ENCODE measurements at regions of chr5 and their contacts with region 1.

Region 1: DNA sequence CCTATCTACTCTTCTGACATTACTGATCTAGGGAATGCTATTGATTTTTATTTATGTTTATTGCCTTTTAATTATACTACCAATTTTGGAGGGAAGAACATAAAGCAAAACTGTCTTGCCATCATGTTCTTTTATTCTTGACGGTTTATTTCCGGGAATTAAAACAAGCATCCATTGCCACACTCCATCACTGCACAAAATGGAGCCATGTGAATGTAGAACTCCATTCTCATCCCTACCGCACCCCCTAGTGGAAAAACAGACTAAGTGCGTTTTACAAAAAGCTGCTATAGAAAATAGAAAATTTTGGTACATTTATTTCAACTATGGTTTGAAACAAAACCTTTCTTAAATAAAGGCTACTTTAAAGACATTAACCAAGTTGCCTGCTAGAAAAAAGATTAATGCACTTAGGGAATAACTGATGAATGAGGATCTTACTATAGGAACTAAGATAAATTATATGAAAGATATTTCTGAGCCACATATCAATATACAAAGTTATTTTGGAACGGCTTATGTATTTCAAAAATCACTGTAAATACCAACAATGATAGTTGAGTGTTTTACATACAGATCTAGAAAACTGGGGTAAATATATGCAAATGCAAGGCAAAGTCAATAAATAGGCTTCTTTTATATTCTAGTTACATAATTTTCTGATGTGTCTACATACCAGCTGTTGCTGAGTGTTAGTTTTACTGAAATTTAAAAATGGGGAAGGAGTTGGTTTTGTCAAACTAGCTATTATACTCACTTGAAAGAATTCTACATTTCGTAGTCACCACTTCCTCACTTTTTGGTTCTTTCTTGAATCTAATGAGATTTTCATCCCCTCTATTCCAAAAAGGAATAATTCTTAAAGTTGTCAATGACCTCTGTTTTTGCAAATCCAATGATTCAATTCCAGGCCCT is 26.5 kb downstream of the OXCT1 start:
- DNase-seq: peak; percentile 33
- ATAC-seq: peak; percentile 67
- H3K4me3 Mint-ChIP-seq: no peak overlapping the region
- H3K27ac Mint-ChIP-seq: no peak overlapping the region
- H3K4me1 Mint-ChIP-seq: peaks cover 20% of the 10 kb centered on the region
- H3K27me3 Mint-ChIP-seq: no peaks in the 10 kb centered on the region
- CTCF ChIP-seq: peak; percentile 89

Region 2: GRCh38 chr5:41695920-41696582 is 147.7 kb before region 1 on chr5:
- CTCF ChIA-PET with region 1: interaction called, 10 read pairs
- POLR2A ChIA-PET with region 1: no interaction called
- intact Hi-C with region 1: no loop called
- DNase-seq: no peak
- ATAC-seq: peak; percentile 39
- H3K4me3 Mint-ChIP-seq: no peak overlapping the region
- H3K27ac Mint-ChIP-seq: no peak overlapping the region
- H3K4me1 Mint-ChIP-seq: no peaks in the 10 kb centered on the region
- H3K27me3 Mint-ChIP-seq: peaks cover 1% of the 10 kb centered on the region
- CTCF ChIP-seq: peak; percentile 40

Region 3: GRCh38 chr5:42035526-42035925 is 191.8 kb after region 1 on chr5:
- CTCF ChIA-PET with region 1: no interaction called
- POLR2A ChIA-PET with region 1: no interaction called
- intact Hi-C with region 1: no loop called
- DNase-seq: no peak
- ATAC-seq: no peak
- H3K4me3 Mint-ChIP-seq: no peak overlapping the region
- H3K27ac Mint-ChIP-seq: no peak overlapping the region
- H3K4me1 Mint-ChIP-seq: no peaks in the 10 kb centered on the region
- H3K27me3 Mint-ChIP-seq: peaks cover 18% of the 10 kb centered on the region
- CTCF ChIP-seq: no peak

Region 4: DNA sequence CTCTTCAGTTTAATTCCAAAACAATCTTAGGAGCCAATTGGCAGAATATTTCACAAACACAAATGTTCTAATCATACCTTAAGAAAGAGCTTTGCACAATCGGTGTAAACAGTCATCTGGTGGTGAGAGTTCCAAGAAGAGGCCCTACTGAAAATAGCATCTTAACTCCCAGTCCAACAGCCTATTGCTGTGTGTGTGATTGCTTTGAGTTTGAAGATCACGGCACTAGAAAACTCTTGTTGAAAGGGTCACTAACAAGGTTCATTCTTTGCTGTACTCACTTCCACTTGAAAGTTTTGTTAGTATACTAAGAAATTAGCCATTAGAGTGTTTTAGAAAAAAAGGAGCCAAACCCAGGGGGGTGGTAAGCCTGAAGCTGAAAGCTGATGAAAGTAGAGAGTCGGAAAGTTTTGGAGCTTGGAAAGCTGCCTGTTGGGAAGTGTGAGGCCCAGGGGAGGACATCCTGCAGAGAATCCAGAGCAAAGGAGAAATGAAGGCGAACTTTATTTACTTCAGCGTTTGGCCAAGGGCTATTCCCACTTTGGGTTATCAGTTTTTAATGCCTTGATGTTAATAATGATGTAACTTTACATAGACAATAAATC is 399.3 kb after region 1 on chr5:
- CTCF ChIA-PET with region 1: no interaction called
- POLR2A ChIA-PET with region 1: no interaction called
- intact Hi-C with region 1: no loop called
- DNase-seq: no peak
- ATAC-seq: no peak
- H3K4me3 Mint-ChIP-seq: no peak overlapping the region
- H3K27ac Mint-ChIP-seq: no peak overlapping the region
- H3K4me1 Mint-ChIP-seq: no peaks in the 10 kb centered on the region
- H3K27me3 Mint-ChIP-seq: no peaks in the 10 kb centered on the region
- CTCF ChIP-seq: no peak

Measured in activated CD8-positive, alpha-beta T cell treated with anti-CD3 and anti-CD28 coated beads for 36 hours (primary cell).